ENCODE measurements at regions of chr4 and their contacts with region 1.

Region 1: GRCh38 chr4:74543231-74543670 is 98.3 kb downstream of the AREG start:
- DNase-seq: no peak
- ATAC-seq: peak; percentile 21
- H3K4me3 ChIP-seq: peak overlapping the region in 1 of 2 experiments; percentile 16; a peak in 2 of 4 replicates
- H3K27ac ChIP-seq: peak overlapping the region; percentile 92
- H3K4me1 ChIP-seq: peaks cover 85 to 96% of the 10 kb centered on the region in 2 experiments
- H3K27me3 ChIP-seq: no peaks in the 10 kb centered on the region
- CTCF ChIP-seq: no peak
- POLR2A ChIP-seq: no peak
- RAD21 ChIP-seq: no peak

Region 2: GRCh38 chr4:74320559-74321118 is 222.6 kb before region 1 on chr4:
- CTCF ChIA-PET with region 1: interaction called, 3 read pairs
- POLR2A ChIA-PET with region 1: interaction called, 10 read pairs
- RAD21 ChIA-PET with region 1: interaction called in 1 of 2 experiments, 5 read pairs
- intact Hi-C with region 1: no loop called
- DNase-seq: peak; percentile 98
- ATAC-seq: peak; percentile 95
- H3K4me3 ChIP-seq: peak overlapping the region; percentile 10 to 41; a peak in 3 of 4 replicates
- H3K27ac ChIP-seq: peak overlapping the region; percentile 58
- H3K4me1 ChIP-seq: peaks cover 29 to 61% of the 10 kb centered on the region in 2 experiments
- H3K27me3 ChIP-seq: no peaks in the 10 kb centered on the region
- CTCF ChIP-seq: peak; percentile 59 to 86 (median 71)
- POLR2A ChIP-seq: no peak
- RAD21 ChIP-seq: peak; percentile 96

Region 3: GRCh38 chr4:74451200-74451661 is 92.0 kb before region 1 on chr4:
- CTCF ChIA-PET with region 1: no interaction called
- POLR2A ChIA-PET with region 1: interaction called, 15 read pairs
- RAD21 ChIA-PET with region 1: no interaction called
- intact Hi-C with region 1: no loop called
- DNase-seq: no peak
- ATAC-seq: peak; percentile 48
- H3K4me3 ChIP-seq: no peak overlapping the region; a peak in 1 of 4 replicates
- H3K27ac ChIP-seq: peak overlapping the region; percentile 85; the same call in 1 of the 2 replicates
- H3K4me1 ChIP-seq: peaks cover 86 to 99% of the 10 kb centered on the region in 2 experiments
- H3K27me3 ChIP-seq: no peaks in the 10 kb centered on the region
- CTCF ChIP-seq: no peak
- POLR2A ChIP-seq: no peak
- RAD21 ChIP-seq: 0 out of 2 replicates have a peak, but pooled peaks have one; percentile 7

Region 4: GRCh38 chr4:74555231-74555630 is 12.0 kb after region 1 on chr4:
- CTCF ChIA-PET with region 1: no interaction called
- POLR2A ChIA-PET with region 1: interaction called, 10 read pairs
- RAD21 ChIA-PET with region 1: no interaction called
- intact Hi-C with region 1: no loop called
- DNase-seq: no peak
- ATAC-seq: peak; percentile 71
- H3K4me3 ChIP-seq: no peak overlapping the region
- H3K27ac ChIP-seq: peak overlapping the region; percentile 26; the same call in 1 of the 2 replicates
- H3K4me1 ChIP-seq: peaks cover 9 to 37% of the 10 kb centered on the region in 2 experiments
- H3K27me3 ChIP-seq: no peaks in the 10 kb centered on the region
- CTCF ChIP-seq: no peak
- POLR2A ChIP-seq: no peak
- RAD21 ChIP-seq: no peak

Region 5: GRCh38 chr4:74654230-74654681 is 111.0 kb after region 1 on chr4:
- CTCF ChIA-PET with region 1: no interaction called
- POLR2A ChIA-PET with region 1: interaction called, 26 read pairs
- RAD21 ChIA-PET with region 1: interaction called in 1 of 2 experiments, 4 read pairs
- intact Hi-C with region 1: no loop called
- DNase-seq: peak; percentile 96
- ATAC-seq: peak; percentile 78
- H3K4me3 ChIP-seq: peak overlapping the region; percentile 1 to 14; a peak in 2 of 4 replicates
- H3K27ac ChIP-seq: peak overlapping the region; percentile 93
- H3K4me1 ChIP-seq: peaks cover 60 to 92% of the 10 kb centered on the region in 2 experiments
- H3K27me3 ChIP-seq: no peaks in the 10 kb centered on the region
- CTCF ChIP-seq: no peak
- POLR2A ChIP-seq: peak; percentile 10
- RAD21 ChIP-seq: no peak

Measured in HCT116 (cell line).